ENCODE measurements at regions of chr17 and their contacts with region 1.

Region 1: DNA sequence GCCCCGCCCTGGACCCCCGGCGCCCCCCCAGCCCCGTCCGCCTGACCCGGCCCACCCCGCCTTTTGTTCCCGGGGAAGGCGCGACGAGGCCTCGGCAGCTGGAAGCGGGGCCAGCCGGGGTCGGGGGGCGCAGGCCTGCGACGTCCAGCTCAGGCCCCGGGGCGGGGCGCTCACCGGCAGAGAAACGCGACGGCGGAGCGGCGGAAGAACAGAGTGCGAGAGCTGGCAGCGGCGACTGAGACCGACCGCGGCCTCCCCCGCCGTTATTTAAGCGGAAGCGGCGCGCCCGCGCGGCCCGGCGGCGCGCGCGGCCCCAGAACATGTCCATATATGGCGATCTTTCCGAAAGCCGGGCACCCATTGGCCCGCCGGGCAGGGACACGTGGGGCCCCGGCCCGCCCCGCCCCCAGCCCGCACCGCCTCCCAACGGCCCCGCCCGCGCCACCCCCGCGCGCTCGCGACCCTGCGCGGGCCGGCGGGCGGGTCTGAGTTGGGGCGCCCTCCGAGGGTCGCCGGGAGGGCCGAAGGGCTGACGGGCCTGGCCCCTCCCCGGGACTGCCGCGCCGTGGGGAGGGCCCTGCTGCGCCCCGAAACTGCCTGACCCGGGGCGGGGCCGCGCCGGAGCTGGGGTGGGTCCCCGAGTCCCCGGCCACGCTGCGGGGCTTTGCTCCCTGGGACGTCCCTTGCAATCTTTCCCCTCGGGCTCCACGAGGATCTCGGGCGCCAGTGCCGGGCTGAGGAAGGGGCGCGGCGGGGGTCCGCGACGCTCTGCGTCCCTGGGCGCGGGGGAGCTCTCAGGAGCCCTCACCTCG is at the start of gene ACTG1:
- DNase-seq: peak; percentile 95
- ATAC-seq: peak; percentile 42
- H3K4me3 ChIP-seq: peak within 1 kb of the TSS; percentile 71 to 96 (median 86)
- H3K4me3 Mint-ChIP-seq: peak within 1 kb of the TSS; percentile 97
- H3K27ac ChIP-seq: peak within 1 kb of the TSS; percentile 89 to 97
- H3K27ac Mint-ChIP-seq: peak within 1 kb of the TSS; percentile 96
- H3K4me1 ChIP-seq: peaks cover 46 to 69% of the 10 kb centered on the region in 2 donors
- H3K4me1 Mint-ChIP-seq: peaks cover 67% of the 10 kb centered on the region
- H3K27me3 ChIP-seq: no peaks in the 10 kb centered on the region
- H3K27me3 Mint-ChIP-seq: no peaks in the 10 kb centered on the region
- CTCF ChIP-seq: no peak
- total RNA-seq, gene ACTG1: 773 and 803 TPM in 2 replicates

Region 2: GRCh38 chr17:80263253-80264204 is 1249.2 kb before region 1 on chr17:
- CTCF ChIA-PET with region 1: no interaction called
- POLR2A ChIA-PET with region 1: interaction called, 4 read pairs
- intact Hi-C with region 1: loop called (anchors 5 kb)
- DNase-seq: peak; percentile 92
- ATAC-seq: peak; percentile 62
- H3K4me3 ChIP-seq: peak overlapping the region; percentile 46 to 99 (median 86)
- H3K4me3 Mint-ChIP-seq: peak overlapping the region; percentile 97
- H3K27ac ChIP-seq: peak overlapping the region; percentile 86 to 90
- H3K27ac Mint-ChIP-seq: peak overlapping the region; percentile 95
- H3K4me1 ChIP-seq: peaks cover 35 to 57% of the 10 kb centered on the region in 2 donors
- H3K4me1 Mint-ChIP-seq: peaks cover 57% of the 10 kb centered on the region
- H3K27me3 ChIP-seq: no peaks in the 10 kb centered on the region
- H3K27me3 Mint-ChIP-seq: no peaks in the 10 kb centered on the region
- CTCF ChIP-seq: peak; percentile 37

Region 3: DNA sequence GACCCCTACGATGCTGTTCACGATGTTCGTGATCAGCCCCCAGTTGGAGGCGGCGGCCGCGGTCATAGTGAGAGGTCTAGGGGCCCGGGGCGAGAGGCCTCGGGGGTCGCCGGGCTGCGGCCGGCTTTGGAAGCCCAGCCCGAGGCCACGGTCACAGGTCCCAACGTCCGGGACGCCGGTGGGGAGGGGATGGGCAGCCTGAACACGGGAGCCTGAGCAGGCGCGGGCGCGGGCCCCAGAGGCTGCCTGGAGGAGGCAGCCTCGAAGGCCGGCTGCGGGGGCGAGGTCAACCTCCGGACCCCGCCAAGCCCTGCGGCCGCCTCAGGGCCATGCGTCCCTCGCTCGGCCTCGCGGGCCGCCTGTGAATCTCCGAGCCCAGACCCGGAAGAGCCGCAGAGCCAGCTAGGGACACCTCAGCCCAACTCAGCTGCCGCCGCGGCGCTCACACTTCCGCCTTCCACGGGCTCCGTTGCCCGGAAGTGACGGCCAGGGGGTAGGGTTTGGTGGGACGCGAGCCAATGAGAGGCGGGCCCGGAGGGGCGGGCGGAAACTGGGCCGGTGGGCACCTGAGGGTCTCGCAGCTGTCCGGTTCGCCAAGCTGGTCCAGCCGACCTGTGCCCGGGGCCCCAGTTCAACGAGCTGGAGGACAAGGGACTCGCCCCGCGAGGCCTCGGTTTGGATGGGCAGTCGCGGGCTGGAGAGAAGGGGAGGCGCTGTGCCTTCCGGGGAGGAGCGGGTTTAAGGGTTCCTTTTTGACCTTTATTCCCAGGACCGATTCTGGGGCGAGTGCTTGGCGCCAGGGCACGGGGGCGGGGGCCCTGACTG is 217.7 kb before region 1 on chr17 and contains the start of gene SLC38A10:
- CTCF ChIA-PET with region 1: interaction called, 8 read pairs
- POLR2A ChIA-PET with region 1: no interaction called
- intact Hi-C with region 1: loop called (anchors 10 kb)
- DNase-seq: peak; percentile 92
- ATAC-seq: peak; percentile 86
- H3K4me3 ChIP-seq: peak within 1 kb of the TSS; percentile 66 to 97 (median 91)
- H3K4me3 Mint-ChIP-seq: peak within 1 kb of the TSS; percentile 97
- H3K27ac ChIP-seq: peak within 1 kb of the TSS; percentile 75 to 94
- H3K27ac Mint-ChIP-seq: peak within 1 kb of the TSS; percentile 97
- H3K4me1 ChIP-seq: peaks cover 19 to 28% of the 10 kb centered on the region in 2 donors
- H3K4me1 Mint-ChIP-seq: peaks cover 43% of the 10 kb centered on the region
- H3K27me3 ChIP-seq: no peaks in the 10 kb centered on the region
- H3K27me3 Mint-ChIP-seq: no peaks in the 10 kb centered on the region
- CTCF ChIP-seq: no peak
- total RNA-seq, gene SLC38A10: 104 and 116 TPM in 2 replicates

Region 4: DNA sequence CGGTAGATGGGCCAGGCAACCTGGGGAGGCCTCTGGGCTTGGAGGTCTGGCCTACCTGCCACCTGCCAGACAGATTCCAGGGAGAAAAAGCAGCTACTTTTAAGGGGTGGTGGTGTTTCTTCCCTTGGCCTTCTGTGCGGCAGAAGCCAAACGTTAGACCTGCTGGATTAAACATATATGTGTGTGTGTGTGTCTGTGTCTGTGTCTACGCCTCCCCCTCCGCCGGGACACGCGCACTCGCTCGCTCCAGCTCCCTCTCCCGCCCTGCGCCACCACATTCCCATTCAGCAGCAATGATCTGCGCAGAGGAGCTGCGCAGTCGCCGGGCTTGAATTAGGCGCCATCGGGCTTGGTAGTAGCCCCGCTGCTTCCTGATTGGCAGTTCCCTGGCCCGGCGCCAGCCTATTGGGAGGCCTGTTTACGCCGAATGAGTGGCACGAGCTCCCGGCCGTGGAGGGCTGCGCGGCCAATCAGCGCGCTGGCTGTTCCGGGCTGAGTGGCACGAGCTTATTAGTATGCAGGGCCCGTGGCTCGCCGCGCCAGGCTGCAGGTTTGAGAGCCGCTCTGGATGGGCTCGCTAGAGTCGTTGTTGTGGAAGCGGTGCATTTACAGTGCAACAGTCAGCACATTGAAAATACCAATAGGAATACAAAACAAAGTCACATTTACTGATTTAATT is 117.7 kb before region 1 on chr17 and contains the start of gene BAHCC1:
- CTCF ChIA-PET with region 1: interaction called, 8 read pairs
- POLR2A ChIA-PET with region 1: interaction called, 10 read pairs
- intact Hi-C with region 1: loop called (anchors 1 kb)
- DNase-seq: peak; percentile 85
- ATAC-seq: peak; percentile 79
- H3K4me3 ChIP-seq: peak within 1 kb of the TSS in 4 of 5 experiments; percentile 17 to 57 (median 36)
- H3K4me3 Mint-ChIP-seq: peak within 1 kb of the TSS; percentile 76
- H3K27ac ChIP-seq: no peak within 1 kb of the TSS
- H3K27ac Mint-ChIP-seq: peak within 1 kb of the TSS; percentile 78
- H3K4me1 ChIP-seq: peaks cover 58 to 66% of the 10 kb centered on the region in 2 donors
- H3K4me1 Mint-ChIP-seq: peaks cover 29% of the 10 kb centered on the region
- H3K27me3 ChIP-seq: peaks cover 0 to 84% (median 55%) of the 10 kb centered on the region in 4 experiments
- H3K27me3 Mint-ChIP-seq: peaks cover 44% of the 10 kb centered on the region
- CTCF ChIP-seq: no peak
- total RNA-seq, gene BAHCC1: 0.12 and 0.44 TPM in 2 replicates

Region 5: DNA sequence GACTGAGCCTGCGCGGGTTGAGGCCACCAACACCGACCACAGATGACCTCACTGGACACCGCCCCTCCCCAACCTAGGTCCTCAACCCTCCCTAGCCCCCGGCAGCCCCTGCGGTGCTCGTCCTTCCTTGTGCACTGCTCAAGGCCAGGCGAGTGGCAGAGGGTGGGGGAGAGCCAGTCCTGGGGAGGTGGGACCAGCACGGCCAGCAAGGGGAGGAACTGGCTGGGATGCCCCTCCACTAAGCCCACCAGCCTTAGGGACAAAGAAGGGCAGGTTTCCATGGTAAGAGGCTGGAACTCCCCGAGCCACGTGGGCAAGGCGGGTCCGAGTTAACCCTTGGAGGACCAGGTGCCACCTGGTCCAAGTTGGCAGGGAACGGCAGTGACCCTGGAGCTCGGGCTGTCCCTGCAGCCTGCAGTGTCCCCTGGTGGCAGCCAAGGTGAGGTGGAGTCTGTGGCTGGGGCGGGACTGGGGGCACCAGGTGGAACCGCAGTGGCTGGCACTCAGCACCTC is 24.6 kb after region 1 on chr17:
- CTCF ChIA-PET with region 1: interaction called, 30 read pairs
- POLR2A ChIA-PET with region 1: interaction called, 5 read pairs
- intact Hi-C with region 1: loop called (anchors 1 kb)
- DNase-seq: peak; percentile 77
- ATAC-seq: peak; percentile 76
- H3K4me3 ChIP-seq: no peak overlapping the region
- H3K4me3 Mint-ChIP-seq: peak overlapping the region; percentile 29
- H3K27ac ChIP-seq: no peak overlapping the region
- H3K27ac Mint-ChIP-seq: no peak overlapping the region
- H3K4me1 ChIP-seq: peaks cover 21 to 36% of the 10 kb centered on the region in 2 donors
- H3K4me1 Mint-ChIP-seq: peaks cover 14% of the 10 kb centered on the region
- H3K27me3 ChIP-seq: peaks cover 0 to 31% (median 10%) of the 10 kb centered on the region in 4 experiments
- H3K27me3 Mint-ChIP-seq: peaks cover 7% of the 10 kb centered on the region
- CTCF ChIP-seq: peak; percentile 68

Region 6: GRCh38 chr17:81601525-81602120 is 88.9 kb after region 1 on chr17:
- CTCF ChIA-PET with region 1: interaction called, 75 read pairs
- POLR2A ChIA-PET with region 1: interaction called, 24 read pairs
- intact Hi-C with region 1: loop called (anchors 1 kb)
- DNase-seq: peak; percentile 81
- ATAC-seq: peak; percentile 52
- H3K4me3 ChIP-seq: no peak overlapping the region
- H3K4me3 Mint-ChIP-seq: peak overlapping the region; percentile 14
- H3K27ac ChIP-seq: no peak overlapping the region
- H3K27ac Mint-ChIP-seq: peak overlapping the region; percentile 43
- H3K4me1 ChIP-seq: peaks cover 22 to 43% of the 10 kb centered on the region in 2 donors
- H3K4me1 Mint-ChIP-seq: peaks cover 38% of the 10 kb centered on the region
- H3K27me3 ChIP-seq: no peaks in the 10 kb centered on the region
- H3K27me3 Mint-ChIP-seq: no peaks in the 10 kb centered on the region
- CTCF ChIP-seq: peak; percentile 95

Region 7: GRCh38 chr17:81860756-81861518 is 348.2 kb after region 1 on chr17:
- CTCF ChIA-PET with region 1: no interaction called
- POLR2A ChIA-PET with region 1: no interaction called
- intact Hi-C with region 1: loop called (anchors 5 kb)
- DNase-seq: no peak
- ATAC-seq: peak; percentile 89
- H3K4me3 ChIP-seq: peak overlapping the region; percentile 39 to 75 (median 71)
- H3K4me3 Mint-ChIP-seq: peak overlapping the region; percentile 92
- H3K27ac ChIP-seq: peak overlapping the region; percentile 94 to 98
- H3K27ac Mint-ChIP-seq: peak overlapping the region; percentile 96
- H3K4me1 ChIP-seq: peaks cover 17 to 26% of the 10 kb centered on the region in 2 donors
- H3K4me1 Mint-ChIP-seq: peaks cover 32% of the 10 kb centered on the region
- H3K27me3 ChIP-seq: no peaks in the 10 kb centered on the region
- H3K27me3 Mint-ChIP-seq: no peaks in the 10 kb centered on the region
- CTCF ChIP-seq: no peak

Measured in B cell (primary cell).